HAP-1 (cell line): ENCODE measurements at regions of chr5 and their contacts with region 1.

Region 1: GRCh38 chr5:97162045-97162444 is 19.6 kb upstream of the LIX1 start:
- DNase-seq: peak; percentile 74 to 82
- H3K4me3 ChIP-seq: no peak overlapping the region
- H3K4me1 ChIP-seq: no peaks in the 10 kb centered on the region
- H3K27me3 ChIP-seq: no peaks in the 10 kb centered on the region

Region 2: DNA sequence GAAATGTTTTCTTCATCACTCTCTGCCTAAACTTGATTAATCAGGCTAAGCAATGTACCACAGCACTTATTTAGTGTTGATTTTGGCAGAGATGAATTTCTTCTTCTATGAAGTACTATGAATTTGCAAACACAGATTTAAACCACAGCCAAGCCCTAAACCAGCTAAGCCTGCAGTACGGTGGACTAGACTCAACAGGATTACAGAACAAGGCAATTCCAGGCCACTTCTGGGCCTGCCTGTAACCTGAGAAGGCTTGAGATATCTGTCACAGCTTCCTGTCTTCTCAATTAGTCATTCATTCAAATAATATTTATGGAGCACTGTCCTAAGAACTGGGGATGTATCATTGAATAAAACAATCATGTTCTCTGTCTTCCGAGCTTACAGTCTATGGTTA is 532.3 kb before region 1 on chr5:
- in situ Hi-C with region 1: loop called (anchors 25 kb)
- DNase-seq: no peak
- H3K4me3 ChIP-seq: no peak overlapping the region
- H3K4me1 ChIP-seq: peaks cover 4% of the 10 kb centered on the region; the same call in 1 of the 2 replicates
- H3K27me3 ChIP-seq: no peaks in the 10 kb centered on the region

Region 3: DNA sequence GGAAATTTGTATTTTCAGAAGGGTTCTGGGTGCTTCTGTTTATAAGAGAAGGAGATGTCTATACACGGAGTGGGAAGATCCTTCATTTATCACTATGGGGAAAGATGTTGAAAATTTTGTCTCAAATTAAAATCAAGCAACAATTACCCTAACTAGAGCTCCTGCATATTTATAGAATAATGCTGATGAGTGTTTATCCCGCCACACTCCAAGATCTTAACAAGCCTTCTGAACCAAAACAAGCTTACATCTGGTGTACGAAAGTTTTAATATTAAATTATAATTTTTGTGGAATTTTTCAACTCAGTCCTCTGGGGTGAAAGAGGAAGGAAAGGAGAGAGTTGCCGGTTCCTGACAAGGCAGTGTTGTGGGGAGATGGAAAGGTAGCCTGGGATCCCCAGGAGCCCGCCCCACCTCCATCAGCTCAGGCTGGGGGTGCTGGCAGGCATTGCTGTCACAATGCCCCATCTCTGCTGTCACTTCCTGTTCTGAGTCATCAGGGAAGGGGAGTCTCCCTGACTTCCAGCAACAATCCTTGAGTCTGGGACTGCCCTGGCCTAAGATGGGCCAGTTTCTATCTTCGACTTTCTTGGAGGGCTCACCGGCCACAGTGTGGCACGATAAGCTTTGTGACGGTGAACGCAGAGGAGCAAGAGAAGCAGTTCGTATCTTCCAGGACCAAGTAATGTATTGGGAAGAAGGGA is 418.8 kb before region 1 on chr5:
- in situ Hi-C with region 1: loop called (anchors 5 kb)
- DNase-seq: no peak
- H3K4me3 ChIP-seq: no peak overlapping the region
- H3K4me1 ChIP-seq: no peaks in the 10 kb centered on the region
- H3K27me3 ChIP-seq: no peaks in the 10 kb centered on the region

Region 4: GRCh38 chr5:96968074-96968473 is 194.0 kb before region 1 on chr5:
- in situ Hi-C with region 1: no loop called
- DNase-seq: peak; percentile 10 to 16
- H3K4me3 ChIP-seq: no peak overlapping the region
- H3K4me1 ChIP-seq: peaks cover 19% of the 10 kb centered on the region
- H3K27me3 ChIP-seq: no peaks in the 10 kb centered on the region